Gastrocnemius medialis (tissue), 4 donors: ENCODE measurements at regions of chr17 and their contacts with region 1.

Region 1: GRCh38 chr17:66975604-66976384 is 11.3 kb downstream of the CACNG4 start:
- DNase-seq: peak; percentile 20 to 45
- ATAC-seq: peak; percentile 32 to 46
- H3K4me3 ChIP-seq: no peak overlapping the region
- H3K27ac ChIP-seq: peak overlapping the region in 1 of 4 donors; percentile 41
- H3K4me1 ChIP-seq: peaks cover 26 to 33% of the 10 kb centered on the region in 2 donors
- H3K27me3 ChIP-seq: no peaks in the 10 kb centered on the region
- CTCF ChIP-seq: peak in 2 of 5 experiments; percentile 11 to 22
- POLR2A ChIP-seq: no peak

Region 2: GRCh38 chr17:66915204-66916096 is 60.3 kb before region 1 on chr17:
- in situ Hi-C with region 1: no loop called
- intact Hi-C with region 1: loop called (anchors 5 kb)
- DNase-seq: no peak
- ATAC-seq: no peak
- H3K4me3 ChIP-seq: no peak overlapping the region
- H3K27ac ChIP-seq: no peak overlapping the region
- H3K4me1 ChIP-seq: no peaks in the 10 kb centered on the region
- H3K27me3 ChIP-seq: no peaks in the 10 kb centered on the region
- CTCF ChIP-seq: peak in 1 of 5 experiments; percentile 31
- POLR2A ChIP-seq: no peak